AG04449 (cell line): ENCODE measurements at regions of chr17 and their contacts with region 1.

Region 1: GRCh38 chr17:61002316-61002736 is 324.7 kb downstream of the BCAS3 start:
- DNase-seq: no peak
- H3K4me3 ChIP-seq: no peak overlapping the region
- CTCF ChIP-seq: peak; percentile 7

Region 2: GRCh38 chr17:61399131-61400057 is 397.1 kb after region 1 on chr17 and contains the start of gene TBX2:
- CTCF ChIA-PET with region 1: interaction called, 54 read pairs
- POLR2A ChIA-PET with region 1: interaction called, 3 read pairs
- DNase-seq: peak; percentile 82
- H3K4me3 ChIP-seq: peak within 1 kb of the TSS; percentile 76
- CTCF ChIP-seq: no peak